GM18951 (cell line): ENCODE measurements at regions of chr7 and their contacts with region 1.

Region 1: GRCh38 chr7:92833024-92833765 is 3.2 kb downstream of the CDK6 start:
- POLR2A ChIP-seq: peak; percentile 49

Region 2: DNA sequence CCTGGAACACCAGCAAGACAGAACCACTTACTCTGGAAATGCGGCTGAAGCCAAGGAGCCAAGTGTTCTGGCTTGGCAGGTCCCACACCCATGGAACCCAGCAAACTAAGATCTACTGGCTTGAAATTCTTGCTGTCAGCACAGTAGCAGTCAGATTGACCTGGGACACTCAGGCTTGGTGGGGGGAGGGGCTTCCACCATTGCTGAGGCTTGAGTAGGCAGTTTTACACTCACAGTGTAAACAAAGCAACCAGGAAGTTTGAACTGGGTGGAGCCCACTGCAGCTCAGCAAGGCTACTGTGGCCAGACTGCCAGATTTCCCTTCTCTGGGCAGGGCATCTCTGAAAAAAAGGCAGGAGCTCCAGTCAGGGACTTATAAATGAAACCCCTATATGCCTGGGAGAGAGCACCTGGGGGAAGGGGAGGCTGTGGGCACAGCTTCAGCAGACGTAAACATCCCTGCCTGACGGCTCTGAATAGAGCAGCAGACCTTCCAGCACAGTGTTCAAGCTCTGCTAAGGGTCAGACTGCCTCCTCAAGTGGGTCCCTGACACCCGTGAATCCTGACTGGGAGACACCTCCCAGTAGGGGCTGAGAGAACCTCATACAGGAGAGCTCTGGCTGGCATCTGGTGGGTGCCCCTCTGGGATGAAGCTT is 1073.9 kb before region 1 on chr7:
- in situ Hi-C with region 1: no loop called
- POLR2A ChIP-seq: no peak

Region 3: GRCh38 chr7:92691578-92691977 is 141.6 kb before region 1 on chr7:
- in situ Hi-C with region 1: loop called (anchors 10 kb)
- POLR2A ChIP-seq: no peak